Activated CD8-positive, alpha-beta T cell treated with anti-CD3 and anti-CD28 coated beads, Interleukin-2, amount 10 ng/mL, durations not matched to agents 7 days and 5 days (primary cell): ENCODE measurements at regions of chr15 and their contacts with region 1.

Region 1: DNA sequence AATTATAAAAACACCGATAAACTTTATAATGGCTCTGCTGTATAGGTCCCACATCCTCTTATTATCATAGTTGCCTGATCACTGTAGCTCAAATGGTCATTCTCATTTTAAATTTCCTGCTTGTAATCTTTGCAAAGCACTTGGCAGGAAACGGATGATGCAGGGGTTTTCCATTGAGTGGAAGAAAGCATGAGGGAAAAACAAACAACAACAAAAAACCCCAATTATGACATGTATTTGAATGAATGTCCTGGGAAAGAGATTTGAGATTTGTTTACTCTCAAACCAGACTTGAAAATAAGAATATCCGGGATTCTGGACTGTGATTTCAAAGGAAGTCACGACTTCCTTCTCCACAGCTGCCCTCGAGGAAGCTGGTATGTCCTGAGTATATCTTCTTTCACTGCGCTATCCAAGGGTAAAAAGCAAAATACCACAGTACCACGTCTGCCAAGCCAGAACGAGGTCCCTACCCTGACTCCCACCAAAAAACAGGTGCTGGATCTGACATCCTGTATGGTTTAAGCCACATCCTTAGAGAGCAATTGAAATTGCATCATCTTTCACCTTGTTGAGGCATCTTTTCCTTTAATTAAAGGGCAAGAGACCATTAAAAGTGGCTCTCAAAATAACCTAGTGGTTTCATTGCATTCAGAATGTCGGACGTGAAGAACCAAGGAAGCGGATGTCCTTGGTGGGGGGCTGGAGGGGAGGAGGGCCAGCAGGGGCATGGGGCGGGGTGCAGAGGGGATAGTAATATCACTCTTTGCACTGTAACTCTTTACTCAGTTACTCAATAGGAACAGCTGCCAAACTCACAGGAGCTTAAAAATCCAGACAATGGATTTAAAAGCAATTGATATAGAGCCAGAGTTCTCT is 13.5 kb upstream of the TIPIN start:
- DNase-seq: peak; percentile 69
- ATAC-seq: peak; percentile 83
- H3K4me3 Mint-ChIP-seq: peak overlapping the region; percentile 56
- H3K27ac Mint-ChIP-seq: peak overlapping the region; percentile 98
- H3K4me1 Mint-ChIP-seq: peaks cover 29% of the 10 kb centered on the region
- H3K27me3 Mint-ChIP-seq: no peaks in the 10 kb centered on the region

Region 2: DNA sequence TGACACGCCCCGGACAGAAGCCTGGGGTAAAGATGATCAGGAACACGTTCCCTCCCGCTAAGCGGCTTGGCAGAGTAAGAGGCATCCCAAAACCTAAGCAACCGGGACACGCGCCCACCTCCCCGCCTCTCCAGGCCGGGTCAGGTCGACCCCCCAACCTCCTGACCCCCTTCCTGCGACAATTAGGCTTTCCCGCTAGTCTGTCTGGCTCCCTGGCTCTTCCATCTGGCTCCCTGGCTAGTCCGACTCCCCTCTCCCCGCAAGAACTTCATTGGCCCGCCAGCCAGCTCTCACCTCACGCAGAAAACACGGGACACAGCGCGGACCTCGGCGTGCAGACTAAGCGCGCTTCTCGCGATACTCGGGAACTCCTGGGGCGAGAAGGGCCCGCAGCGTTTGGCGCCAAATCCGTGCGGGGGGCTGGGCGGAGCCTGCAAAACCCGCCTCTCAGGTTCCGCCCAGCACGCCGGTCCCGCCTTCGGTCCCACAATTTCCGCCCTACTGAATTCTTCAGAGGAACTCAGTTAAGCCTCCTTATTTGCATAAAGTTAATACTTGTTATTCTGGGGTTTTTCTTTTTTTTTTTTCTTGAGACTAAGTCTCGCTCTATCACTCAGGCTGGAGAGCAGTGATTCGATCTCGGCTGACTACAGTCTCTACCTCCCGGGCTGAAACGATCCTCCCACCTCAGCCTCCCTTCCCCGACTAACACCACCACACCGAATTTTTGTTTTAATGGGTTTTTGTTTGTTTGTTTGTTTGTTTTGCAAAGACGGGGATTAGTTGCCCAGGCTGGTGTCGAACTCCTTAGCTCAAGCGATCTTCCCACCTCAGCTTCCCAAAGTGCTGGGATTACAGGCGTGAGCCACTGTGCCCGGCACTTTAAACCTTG is 13.4 kb before region 1 on chr15 and contains the start of gene TIPIN:
- CTCF ChIA-PET with region 1: interaction called, 3 read pairs
- POLR2A ChIA-PET with region 1: interaction called, 13 read pairs
- DNase-seq: peak; percentile 99
- ATAC-seq: peak; percentile 99
- H3K4me3 Mint-ChIP-seq: peak within 1 kb of the TSS; percentile 95
- H3K27ac Mint-ChIP-seq: peak within 1 kb of the TSS; percentile 97
- H3K4me1 Mint-ChIP-seq: peaks cover 42% of the 10 kb centered on the region
- H3K27me3 Mint-ChIP-seq: no peaks in the 10 kb centered on the region
- total RNA-seq, gene TIPIN: 36.4 to 42.7 TPM